ENCODE measurements at regions of chr17 and their contacts with region 1.

Region 1: GRCh38 chr17:43946069-43946696 is 3.9 kb upstream of the PPY start:
- H3K4me3 ChIP-seq: no peak overlapping the region
- H3K27ac ChIP-seq: no peak overlapping the region
- H3K4me1 ChIP-seq: no peaks in the 10 kb centered on the region; the same call in 1 of the 2 replicates
- CTCF ChIP-seq: 0 out of 2 replicates have a peak, but pooled peaks have one; percentile 8

Region 2: DNA sequence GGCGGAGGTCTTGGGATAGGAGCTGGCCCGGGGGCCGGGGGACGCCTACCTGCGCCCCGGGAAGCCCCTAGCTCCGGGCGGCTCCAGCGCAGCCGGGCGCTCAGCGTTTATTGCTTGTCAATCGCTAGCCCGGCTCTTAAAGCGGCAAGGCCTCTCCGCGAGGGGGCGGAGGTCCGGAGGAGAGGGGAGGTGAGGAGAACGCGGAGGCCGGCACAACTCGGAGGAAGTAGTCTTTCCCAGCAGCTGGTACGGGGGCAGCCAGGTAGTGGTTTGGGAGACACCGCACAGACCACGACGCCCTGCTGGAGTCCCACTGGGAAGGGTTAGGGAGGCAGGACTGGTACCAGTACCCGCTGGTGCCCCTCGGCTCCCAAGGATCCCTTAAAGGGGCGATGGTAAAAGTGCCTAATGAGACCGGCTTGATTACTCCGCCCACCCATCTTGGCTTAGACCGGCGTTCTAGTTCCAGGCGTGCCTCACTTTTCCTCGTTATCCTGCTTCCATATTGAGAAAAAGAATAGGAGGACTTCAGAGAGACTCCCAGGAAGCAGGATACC is 38.7 kb before region 1 on chr17 and contains the start of gene MPP2:
- CTCF ChIA-PET with region 1: interaction called, 51 read pairs
- POLR2A ChIA-PET with region 1: no interaction called
- H3K4me3 ChIP-seq: peak within 1 kb of the TSS; percentile 47
- H3K27ac ChIP-seq: peak within 1 kb of the TSS; percentile 51; the same call in 1 of the 2 replicates
- H3K4me1 ChIP-seq: peaks cover 12% of the 10 kb centered on the region; the same call in 1 of the 2 replicates
- CTCF ChIP-seq: 0 out of 2 replicates have a peak, but pooled peaks have one; percentile 62

Region 3: GRCh38 chr17:43915559-43915958 is 30.6 kb before region 1 on chr17:
- CTCF ChIA-PET with region 1: interaction called, 51 read pairs
- POLR2A ChIA-PET with region 1: interaction called, 3 read pairs
- H3K4me3 ChIP-seq: no peak overlapping the region
- H3K27ac ChIP-seq: no peak overlapping the region
- H3K4me1 ChIP-seq: no peaks in the 10 kb centered on the region
- CTCF ChIP-seq: no peak

Region 4: DNA sequence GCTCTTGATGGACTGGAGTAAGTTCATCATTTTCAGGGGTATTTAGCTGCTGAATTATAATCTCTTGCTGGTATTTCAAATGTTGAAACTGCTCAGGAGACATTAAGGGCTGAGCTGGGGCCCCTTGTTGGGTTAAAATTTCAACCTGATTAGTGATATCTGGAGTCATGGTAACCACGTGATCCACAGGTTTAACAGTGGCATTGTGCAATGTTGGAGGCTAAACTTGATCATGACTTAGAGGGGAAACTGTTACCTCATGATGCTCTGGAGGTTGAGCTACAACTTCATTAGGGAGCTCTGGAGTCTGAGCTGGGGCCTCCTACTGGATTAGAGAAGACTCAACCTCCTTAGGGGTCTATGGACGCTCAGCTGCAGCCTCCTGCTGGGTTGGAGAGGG is 21.6 kb before region 1 on chr17:
- CTCF ChIA-PET with region 1: interaction called, 11 read pairs
- POLR2A ChIA-PET with region 1: interaction called, 3 read pairs
- H3K4me3 ChIP-seq: no peak overlapping the region
- H3K27ac ChIP-seq: no peak overlapping the region
- H3K4me1 ChIP-seq: no peaks in the 10 kb centered on the region
- CTCF ChIP-seq: no peak

Region 5: GRCh38 chr17:43983515-43984411 is 37.6 kb after region 1 on chr17:
- CTCF ChIA-PET with region 1: interaction called, 27 read pairs
- POLR2A ChIA-PET with region 1: no interaction called
- H3K4me3 ChIP-seq: peak overlapping the region; percentile 31
- H3K27ac ChIP-seq: no peak overlapping the region; the same call in 1 of the 2 replicates
- H3K4me1 ChIP-seq: no peaks in the 10 kb centered on the region; the same call in 1 of the 2 replicates
- CTCF ChIP-seq: peak; percentile 65

Region 6: GRCh38 chr17:44024271-44024663 is 78.1 kb after region 1 on chr17:
- CTCF ChIA-PET with region 1: interaction called, 12 read pairs
- POLR2A ChIA-PET with region 1: no interaction called
- H3K4me3 ChIP-seq: no peak overlapping the region
- H3K27ac ChIP-seq: no peak overlapping the region
- H3K4me1 ChIP-seq: no peaks in the 10 kb centered on the region
- CTCF ChIP-seq: no peak

Region 7: DNA sequence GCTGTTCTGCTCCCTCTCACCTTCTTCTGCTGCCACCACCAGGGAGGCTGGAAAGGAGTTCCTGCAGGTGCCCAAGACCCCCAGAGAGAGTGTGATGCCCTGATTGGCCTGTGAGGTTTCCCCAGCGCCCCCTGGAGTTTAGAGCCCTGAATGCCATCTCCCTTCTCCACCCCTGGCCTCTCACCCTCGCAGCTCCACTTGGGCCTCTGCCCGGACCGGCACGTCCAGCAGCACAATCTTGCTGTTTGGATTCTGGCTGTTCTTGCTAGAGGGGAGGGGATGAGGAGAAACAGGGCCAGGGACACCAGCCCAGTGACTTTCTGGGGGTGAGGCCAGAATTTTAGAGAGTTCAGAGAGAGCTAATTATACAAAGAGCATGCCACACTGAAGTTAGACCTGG is 429.9 kb after region 1 on chr17:
- CTCF ChIA-PET with region 1: no interaction called
- POLR2A ChIA-PET with region 1: no interaction called
- H3K4me3 ChIP-seq: no peak overlapping the region
- H3K27ac ChIP-seq: no peak overlapping the region
- H3K4me1 ChIP-seq: no peaks in the 10 kb centered on the region
- CTCF ChIP-seq: peak; percentile 15; the same call in 1 of the 2 replicates